Left lung (tissue), 14 donors: ENCODE measurements at regions of chr3 and their contacts with region 1.

Region 1: DNA sequence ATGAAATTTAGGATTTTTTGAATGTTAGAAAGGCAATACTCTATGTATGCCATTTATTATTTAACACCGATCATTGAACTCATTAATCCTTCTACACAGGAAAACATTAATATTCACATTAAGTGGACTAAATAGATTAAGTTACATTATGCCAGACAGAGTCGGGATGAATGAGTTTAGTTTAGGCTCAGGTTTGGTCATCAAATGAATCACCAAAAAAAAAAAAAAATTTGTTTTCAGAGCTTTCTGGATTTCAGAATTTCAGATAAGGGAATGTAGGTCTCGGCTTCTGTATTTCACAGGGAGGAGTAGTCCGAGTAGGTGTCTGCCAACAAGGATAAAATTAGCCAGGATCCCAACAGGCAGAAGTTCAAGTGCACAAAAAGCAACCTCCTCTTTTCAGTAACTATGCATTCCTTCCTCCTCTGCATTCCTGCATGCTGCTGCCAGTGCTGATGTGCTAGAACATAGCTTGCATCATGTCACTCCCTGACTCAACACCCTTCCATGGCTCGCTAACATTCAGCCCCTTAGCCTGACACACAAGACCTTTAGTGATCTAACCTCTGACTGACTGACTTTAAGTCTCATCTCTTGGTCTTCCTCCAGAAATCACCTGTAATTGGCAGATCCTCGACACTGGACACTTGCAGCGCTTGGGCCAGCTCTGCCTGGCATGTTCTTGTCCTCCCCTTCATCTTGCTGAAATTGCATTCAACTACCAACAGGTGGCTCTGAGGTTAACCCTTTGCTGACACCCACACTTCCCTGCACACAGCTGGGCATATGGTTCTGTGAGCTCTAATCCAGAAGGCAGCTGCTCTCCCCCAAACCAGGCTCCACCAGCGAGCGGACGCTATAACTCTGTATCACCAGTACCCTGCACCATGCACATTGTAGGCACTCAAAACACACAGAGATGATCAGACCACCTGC is 145.4 kb upstream of the PROK2 start:
- DNase-seq: no peak
- ATAC-seq: peak; percentile 53
- H3K4me3 ChIP-seq: no peak overlapping the region
- H3K27ac ChIP-seq: no peak overlapping the region
- H3K4me1 ChIP-seq: no peaks in the 10 kb centered on the region
- H3K27me3 ChIP-seq: no peaks in the 10 kb centered on the region
- CTCF ChIP-seq: no peak

Region 2: GRCh38 chr3:71673486-71673885 is 256.8 kb before region 1 on chr3:
- intact Hi-C with region 1: no loop called
- DNase-seq: no peak
- ATAC-seq: peak; percentile 21
- H3K4me3 ChIP-seq: no peak overlapping the region
- H3K27ac ChIP-seq: no peak overlapping the region
- H3K4me1 ChIP-seq: no peaks in the 10 kb centered on the region
- H3K27me3 ChIP-seq: no peaks in the 10 kb centered on the region
- CTCF ChIP-seq: no peak

Region 3: GRCh38 chr3:71875461-71875947 is 54.8 kb before region 1 on chr3:
- intact Hi-C with region 1: no loop called
- DNase-seq: peak; percentile 42 to 91 (median 76)
- ATAC-seq: peak; percentile 99
- H3K4me3 ChIP-seq: no peak overlapping the region
- H3K27ac ChIP-seq: no peak overlapping the region
- H3K4me1 ChIP-seq: peaks cover 0 to 16% of the 10 kb centered on the region in 2 donors
- H3K27me3 ChIP-seq: no peaks in the 10 kb centered on the region
- CTCF ChIP-seq: peak; percentile 80 to 89

Region 4: GRCh38 chr3:71998995-71999673 is 68.8 kb after region 1 on chr3:
- intact Hi-C with region 1: loop called in 1 of 2 experiments (anchors 10 kb)
- DNase-seq: no peak
- ATAC-seq: peak; percentile 72
- H3K4me3 ChIP-seq: no peak overlapping the region
- H3K27ac ChIP-seq: no peak overlapping the region
- H3K4me1 ChIP-seq: peaks cover 0 to 9% of the 10 kb centered on the region in 2 donors
- H3K27me3 ChIP-seq: no peaks in the 10 kb centered on the region
- CTCF ChIP-seq: no peak